MCF 10A (cell line): ENCODE measurements at regions of chr6 and their contacts with region 1.

Region 1: GRCh38 chr6:26216356-26216885 is 129.2 kb downstream of the HFE start:
- DNase-seq: peak; percentile 98
- H3K4me3 Mint-ChIP-seq: no peak overlapping the region
- H3K27ac Mint-ChIP-seq: no peak overlapping the region
- H3K4me1 Mint-ChIP-seq: no peaks in the 10 kb centered on the region
- H3K27me3 Mint-ChIP-seq: no peaks in the 10 kb centered on the region
- CTCF ChIP-seq: no peak

Region 2: GRCh38 chr6:25922301-25922700 is 294.1 kb before region 1 on chr6:
- CTCF ChIA-PET with region 1: no interaction called
- POLR2A ChIA-PET with region 1: no interaction called
- intact Hi-C with region 1: no loop called
- DNase-seq: no peak
- H3K4me3 Mint-ChIP-seq: no peak overlapping the region
- H3K27ac Mint-ChIP-seq: no peak overlapping the region
- H3K4me1 Mint-ChIP-seq: no peaks in the 10 kb centered on the region
- H3K27me3 Mint-ChIP-seq: no peaks in the 10 kb centered on the region
- CTCF ChIP-seq: no peak

Region 3: DNA sequence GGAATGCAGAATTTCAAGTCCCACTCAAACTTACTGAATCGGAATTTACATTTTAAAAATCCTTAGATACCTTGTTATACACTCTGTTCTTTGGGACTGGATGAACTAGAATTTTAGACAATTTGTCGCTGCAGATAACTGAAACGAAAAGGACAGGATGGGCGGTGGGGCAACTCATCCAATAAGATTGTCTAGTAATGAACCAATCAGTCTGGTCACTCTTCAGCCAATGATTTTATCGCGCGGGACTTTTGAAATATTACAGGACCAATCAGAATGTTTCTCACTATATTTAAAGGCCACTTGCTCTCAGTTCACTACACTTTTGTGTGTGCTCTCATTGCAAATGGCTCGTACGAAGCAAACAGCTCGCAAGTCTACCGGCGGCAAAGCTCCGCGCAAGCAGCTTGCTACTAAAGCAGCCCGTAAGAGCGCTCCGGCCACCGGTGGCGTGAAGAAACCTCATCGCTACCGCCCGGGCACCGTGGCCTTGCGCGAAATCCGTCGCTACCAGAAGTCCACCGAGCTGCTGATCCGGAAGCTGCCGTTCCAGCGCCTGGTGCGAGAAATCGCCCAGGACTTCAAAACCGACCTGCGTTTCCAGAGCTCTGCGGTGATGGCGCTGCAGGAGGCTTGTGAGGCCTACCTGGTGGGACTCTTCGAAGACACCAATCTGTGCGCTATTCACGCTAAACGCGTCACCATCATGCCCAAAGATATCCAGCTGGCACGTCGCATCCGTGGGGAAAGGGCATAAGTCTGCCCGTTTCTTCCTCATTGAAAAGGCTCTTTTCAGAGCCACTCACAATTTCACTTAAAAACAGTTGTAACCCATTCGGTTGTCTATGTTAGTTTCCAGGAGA is 171.1 kb before region 1 on chr6:
- CTCF ChIA-PET with region 1: no interaction called
- POLR2A ChIA-PET with region 1: interaction called, 40 read pairs
- intact Hi-C with region 1: no loop called
- DNase-seq: peak; percentile 95
- H3K4me3 Mint-ChIP-seq: peak overlapping the region; percentile 80
- H3K27ac Mint-ChIP-seq: peak overlapping the region; percentile 86
- H3K4me1 Mint-ChIP-seq: peaks cover 16% of the 10 kb centered on the region
- H3K27me3 Mint-ChIP-seq: no peaks in the 10 kb centered on the region
- CTCF ChIP-seq: no peak

Region 4: DNA sequence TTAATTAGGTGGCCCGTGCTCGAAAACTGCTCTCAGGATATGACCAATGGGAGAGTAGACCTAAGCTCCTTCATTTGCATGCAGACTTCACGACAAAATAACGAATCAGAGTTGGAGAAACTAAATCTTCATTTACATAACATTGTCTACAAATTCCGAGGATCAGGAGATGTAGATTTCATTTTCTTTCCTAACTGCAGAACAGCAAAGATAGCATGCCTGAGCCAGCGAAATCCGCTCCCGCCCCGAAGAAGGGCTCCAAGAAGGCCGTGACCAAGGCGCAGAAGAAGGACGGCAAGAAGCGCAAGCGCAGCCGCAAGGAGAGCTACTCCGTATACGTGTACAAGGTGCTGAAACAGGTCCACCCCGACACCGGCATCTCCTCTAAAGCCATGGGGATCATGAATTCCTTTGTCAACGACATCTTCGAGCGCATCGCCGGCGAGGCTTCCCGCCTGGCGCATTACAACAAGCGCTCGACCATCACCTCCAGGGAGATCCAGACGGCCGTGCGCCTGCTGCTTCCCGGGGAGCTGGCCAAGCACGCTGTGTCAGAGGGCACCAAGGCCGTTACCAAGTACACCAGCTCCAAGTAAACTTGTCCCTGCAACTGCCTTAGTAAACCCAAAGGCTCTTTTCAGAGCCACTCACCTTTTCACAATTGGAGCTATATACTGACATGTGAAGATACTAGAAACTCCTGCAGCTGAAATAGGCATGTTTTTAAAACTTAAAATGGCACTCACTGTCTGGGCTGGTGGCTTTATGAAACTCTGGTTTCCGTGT is 32.6 kb before region 1 on chr6:
- CTCF ChIA-PET with region 1: no interaction called
- POLR2A ChIA-PET with region 1: interaction called, 234 read pairs
- intact Hi-C with region 1: no loop called
- DNase-seq: peak; percentile 56
- H3K4me3 Mint-ChIP-seq: peak overlapping the region; percentile 79
- H3K27ac Mint-ChIP-seq: peak overlapping the region; percentile 84
- H3K4me1 Mint-ChIP-seq: peaks cover 27% of the 10 kb centered on the region
- H3K27me3 Mint-ChIP-seq: no peaks in the 10 kb centered on the region
- CTCF ChIP-seq: no peak

Region 5: GRCh38 chr6:26249957-26250697 is 33.7 kb after region 1 on chr6:
- CTCF ChIA-PET with region 1: interaction called, 7 read pairs
- POLR2A ChIA-PET with region 1: interaction called, 22 read pairs
- intact Hi-C with region 1: loop called (anchors 1 kb)
- DNase-seq: peak; percentile 87
- H3K4me3 Mint-ChIP-seq: peak overlapping the region; percentile 94
- H3K27ac Mint-ChIP-seq: peak overlapping the region; percentile 63
- H3K4me1 Mint-ChIP-seq: peaks cover 7% of the 10 kb centered on the region
- H3K27me3 Mint-ChIP-seq: no peaks in the 10 kb centered on the region
- CTCF ChIP-seq: peak; percentile 42

Region 6: GRCh38 chr6:26329763-26330511 is 113.5 kb after region 1 on chr6:
- CTCF ChIA-PET with region 1: no interaction called
- POLR2A ChIA-PET with region 1: interaction called, 13 read pairs
- intact Hi-C with region 1: loop called (anchors 2 kb)
- DNase-seq: peak; percentile 73
- H3K4me3 Mint-ChIP-seq: peak overlapping the region; percentile 75
- H3K27ac Mint-ChIP-seq: peak overlapping the region; percentile 63
- H3K4me1 Mint-ChIP-seq: peaks cover 12% of the 10 kb centered on the region
- H3K27me3 Mint-ChIP-seq: no peaks in the 10 kb centered on the region
- CTCF ChIP-seq: no peak

Region 7: GRCh38 chr6:27250277-27251111 is 1034.1 kb after region 1 on chr6:
- CTCF ChIA-PET with region 1: no interaction called
- POLR2A ChIA-PET with region 1: no interaction called
- intact Hi-C with region 1: no loop called
- DNase-seq: no peak
- H3K4me3 Mint-ChIP-seq: peak overlapping the region; percentile 99
- H3K27ac Mint-ChIP-seq: peak overlapping the region; percentile 84
- H3K4me1 Mint-ChIP-seq: no peaks in the 10 kb centered on the region
- H3K27me3 Mint-ChIP-seq: no peaks in the 10 kb centered on the region
- CTCF ChIP-seq: no peak

Region 8: DNA sequence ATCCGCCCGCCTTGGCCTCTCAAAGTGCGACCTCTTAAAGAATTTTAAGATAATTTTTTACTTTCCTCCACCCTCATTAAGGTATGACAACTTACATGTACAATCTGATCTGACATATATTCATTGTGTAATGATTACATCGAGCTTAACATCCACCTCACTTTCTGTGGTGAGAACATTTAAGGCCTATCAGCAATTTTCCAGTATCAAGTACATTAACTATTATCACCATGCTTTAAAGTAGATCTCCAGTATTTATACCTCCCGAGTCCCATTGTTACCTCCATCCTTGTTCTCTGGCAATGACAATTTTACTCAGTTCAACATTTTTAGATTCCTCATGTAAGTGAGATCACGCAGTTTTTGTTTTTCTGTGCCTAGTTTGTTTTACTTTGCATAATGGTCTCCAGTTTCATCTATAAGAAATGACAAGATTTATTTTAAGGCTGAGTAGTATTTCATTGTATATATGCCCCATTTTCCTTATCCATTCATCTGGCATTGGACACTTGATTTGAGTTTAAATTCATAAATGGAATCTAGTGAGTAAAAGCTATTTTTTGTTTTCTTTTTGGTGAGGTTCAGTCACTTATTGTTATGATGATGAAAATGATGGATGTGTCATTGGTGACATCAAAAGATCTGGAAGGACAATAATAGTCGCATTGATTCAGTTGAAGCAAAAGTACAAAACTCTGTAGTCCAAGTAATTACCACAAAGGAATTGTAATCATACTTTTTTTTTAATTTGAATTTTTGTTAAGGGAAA is 1608.8 kb after region 1 on chr6:
- CTCF ChIA-PET with region 1: no interaction called
- POLR2A ChIA-PET with region 1: interaction called, 27 read pairs
- intact Hi-C with region 1: no loop called
- DNase-seq: no peak
- H3K4me3 Mint-ChIP-seq: peak overlapping the region; percentile 94
- H3K27ac Mint-ChIP-seq: peak overlapping the region; percentile 95
- H3K4me1 Mint-ChIP-seq: peaks cover 10% of the 10 kb centered on the region
- H3K27me3 Mint-ChIP-seq: no peaks in the 10 kb centered on the region
- CTCF ChIP-seq: no peak